Activated CD4-positive, alpha-beta memory T cell treated with anti-CD3 and anti-CD28 coated beads, Interleukin-2, amount 10 ng/mL, durations not matched to agents 7 days and 5 days (primary cell): ENCODE measurements at regions of chr14 and their contacts with region 1.

Region 1: DNA sequence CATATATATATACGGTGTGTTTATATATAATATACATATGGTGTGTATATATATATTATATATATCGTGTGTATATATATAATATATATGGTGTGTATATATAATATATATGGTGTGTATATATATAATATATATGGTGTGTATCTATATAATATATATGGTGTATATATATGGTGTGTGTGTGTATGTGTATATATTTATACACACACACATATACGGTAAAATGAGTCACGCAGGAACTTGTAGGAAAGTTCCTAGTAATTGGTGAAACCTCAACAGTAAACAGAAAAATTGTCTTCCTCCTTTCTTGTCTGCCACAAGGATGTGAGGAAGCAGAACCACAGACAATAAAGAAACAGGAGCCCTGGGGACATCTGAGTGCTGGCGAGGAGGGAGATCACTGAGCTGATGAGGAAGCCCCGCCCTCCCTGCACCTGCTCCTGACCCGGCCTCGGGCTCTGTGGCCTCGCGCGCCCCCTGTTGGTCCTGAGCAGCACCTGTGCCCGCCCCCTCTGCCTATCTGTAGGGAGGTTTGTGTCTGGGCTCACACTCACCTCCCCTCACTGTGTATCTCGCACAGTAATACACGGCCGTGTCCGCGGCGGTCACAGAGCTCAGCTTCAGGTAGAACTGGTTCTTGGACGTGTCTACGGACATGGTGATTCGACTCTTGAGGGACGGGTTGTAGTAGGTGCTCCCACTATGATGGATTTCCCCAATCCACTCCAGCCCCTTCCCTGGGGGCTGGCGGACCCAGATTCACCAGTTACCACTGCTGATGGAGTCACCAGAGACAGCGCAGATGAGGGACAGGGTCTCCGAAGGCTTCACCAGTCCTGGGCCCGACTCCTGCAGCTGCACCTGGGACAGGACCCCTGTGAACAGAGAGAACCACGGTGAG is 1079.4 kb downstream of the TMEM121 start:
- DNase-seq: peak; percentile 82
- H3K4me3 Mint-ChIP-seq: no peak overlapping the region
- H3K27ac Mint-ChIP-seq: no peak overlapping the region
- H3K4me1 Mint-ChIP-seq: peaks cover 11% of the 10 kb centered on the region
- H3K27me3 Mint-ChIP-seq: peaks cover 55% of the 10 kb centered on the region

Region 2: DNA sequence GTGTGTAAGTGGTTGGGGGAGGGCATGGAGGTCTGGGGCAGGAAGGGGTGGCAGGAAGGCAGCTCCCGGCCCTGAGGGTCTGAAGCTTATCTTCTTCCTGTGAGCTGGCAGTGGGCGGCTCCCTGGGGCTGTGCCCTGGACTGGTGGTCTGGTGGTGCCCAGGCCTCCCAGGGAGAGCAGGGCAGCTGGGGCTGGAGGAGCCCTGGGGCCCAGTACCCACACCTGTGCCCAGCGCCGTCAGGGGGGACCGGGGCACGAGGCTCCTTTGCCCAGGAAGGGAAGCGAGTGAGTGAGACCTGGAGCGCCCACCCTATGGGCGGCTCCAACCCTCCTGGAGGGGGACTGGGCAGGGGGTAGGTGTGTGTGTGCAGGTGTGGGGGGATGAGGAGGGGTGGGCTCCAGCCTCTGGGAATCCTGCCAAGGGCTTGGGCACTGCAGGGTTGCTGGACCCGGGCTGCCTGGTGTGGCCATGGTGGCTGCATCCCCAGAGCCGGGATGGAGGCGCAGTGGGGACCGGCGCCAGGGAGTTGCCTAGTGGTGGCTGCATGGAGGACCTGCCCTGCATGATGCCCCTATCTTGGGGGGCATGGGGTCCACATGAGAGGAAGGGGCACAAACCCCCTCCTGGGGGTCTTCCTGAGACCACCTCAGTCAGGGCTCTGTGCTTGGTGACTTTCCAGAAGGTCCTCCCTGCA is 725.8 kb before region 1 on chr14:
- CTCF ChIA-PET with region 1: no interaction called
- POLR2A ChIA-PET with region 1: no interaction called
- DNase-seq: no peak
- H3K4me3 Mint-ChIP-seq: no peak overlapping the region
- H3K27ac Mint-ChIP-seq: no peak overlapping the region
- H3K4me1 Mint-ChIP-seq: peaks cover 4% of the 10 kb centered on the region
- H3K27me3 Mint-ChIP-seq: peaks cover 37% of the 10 kb centered on the region

Region 3: DNA sequence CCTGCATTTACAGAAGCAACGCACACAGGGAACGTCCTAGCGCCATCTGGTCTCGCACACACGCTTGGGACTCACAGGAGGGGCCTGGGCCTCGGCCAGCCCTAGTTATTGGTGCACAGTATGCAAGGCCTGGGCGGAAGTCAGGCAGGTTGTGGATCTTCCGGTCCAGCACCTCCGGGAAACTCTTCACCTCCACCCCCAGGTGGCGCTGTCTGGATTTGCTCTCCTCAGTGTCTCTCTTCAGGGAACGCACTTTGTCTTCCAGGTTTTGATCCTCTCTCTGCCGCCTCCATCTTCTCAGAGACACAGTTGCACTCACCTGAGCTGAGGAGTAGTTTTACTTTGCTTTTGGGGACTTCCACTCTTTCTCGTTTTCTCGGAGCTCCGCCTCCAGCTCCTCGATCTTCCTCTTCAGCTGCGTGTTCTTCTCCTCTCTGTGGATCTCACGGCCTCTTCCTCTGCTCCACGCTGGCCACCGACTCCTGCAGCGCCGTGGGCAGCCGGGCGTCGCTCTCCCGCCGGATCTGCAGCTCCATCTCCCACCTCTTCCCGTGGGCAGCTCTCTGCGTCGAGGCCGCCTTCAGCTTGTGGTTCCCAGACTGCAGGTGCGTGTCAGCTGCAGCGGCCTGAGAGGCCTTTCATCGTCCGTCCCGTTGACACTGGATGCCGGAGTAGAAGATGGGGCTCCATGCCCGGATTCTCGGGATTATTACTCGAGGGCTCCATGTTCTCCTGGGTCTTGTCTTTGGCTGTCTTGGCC is 145.6 kb before region 1 on chr14:
- CTCF ChIA-PET with region 1: no interaction called
- POLR2A ChIA-PET with region 1: no interaction called
- DNase-seq: peak; percentile 74
- H3K4me3 Mint-ChIP-seq: no peak overlapping the region
- H3K27ac Mint-ChIP-seq: no peak overlapping the region
- H3K4me1 Mint-ChIP-seq: peaks cover 13% of the 10 kb centered on the region
- H3K27me3 Mint-ChIP-seq: peaks cover 13% of the 10 kb centered on the region

Region 4: GRCh38 chr14:106518054-106518943 is 87.5 kb before region 1 on chr14:
- CTCF ChIA-PET with region 1: no interaction called
- POLR2A ChIA-PET with region 1: no interaction called
- DNase-seq: peak; percentile 85
- H3K4me3 Mint-ChIP-seq: no peak overlapping the region
- H3K27ac Mint-ChIP-seq: no peak overlapping the region
- H3K4me1 Mint-ChIP-seq: peaks cover 14% of the 10 kb centered on the region
- H3K27me3 Mint-ChIP-seq: peaks cover 46% of the 10 kb centered on the region

Region 5: DNA sequence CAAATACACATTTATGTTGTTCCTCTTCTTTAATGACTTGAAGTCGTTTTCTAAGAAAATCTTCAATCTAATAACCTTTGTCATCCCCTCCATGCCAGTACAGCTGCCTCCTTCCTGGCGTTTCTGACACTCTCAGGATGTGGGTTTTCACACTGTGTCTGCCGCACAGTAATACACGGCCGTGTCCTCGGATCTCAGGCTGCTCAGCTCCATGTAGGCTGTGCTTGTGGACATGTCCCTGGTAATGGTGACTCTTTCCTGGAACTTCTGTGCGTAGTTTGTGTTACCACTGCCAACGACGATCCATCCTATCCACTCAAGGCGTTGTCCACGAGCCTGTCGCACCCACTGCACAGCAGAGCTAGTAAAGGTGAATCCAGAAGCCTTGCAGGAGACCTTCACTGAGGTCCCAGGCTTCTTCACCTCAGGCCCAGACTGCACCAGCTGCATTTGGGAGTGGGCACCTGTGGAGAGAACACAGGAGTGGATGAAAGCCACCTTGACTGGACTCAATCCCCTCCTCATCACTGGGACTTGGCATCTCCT is 16.5 kb after region 1 on chr14:
- CTCF ChIA-PET with region 1: interaction called, 34 read pairs
- POLR2A ChIA-PET with region 1: no interaction called
- DNase-seq: peak; percentile 68
- H3K4me3 Mint-ChIP-seq: no peak overlapping the region
- H3K27ac Mint-ChIP-seq: no peak overlapping the region
- H3K4me1 Mint-ChIP-seq: peaks cover 25% of the 10 kb centered on the region
- H3K27me3 Mint-ChIP-seq: peaks cover 55% of the 10 kb centered on the region

Region 6: GRCh38 chr14:106813477-106813823 is 207.7 kb after region 1 on chr14:
- CTCF ChIA-PET with region 1: no interaction called
- POLR2A ChIA-PET with region 1: no interaction called
- DNase-seq: no peak
- H3K4me3 Mint-ChIP-seq: no peak overlapping the region
- H3K27ac Mint-ChIP-seq: no peak overlapping the region
- H3K4me1 Mint-ChIP-seq: peaks cover 25% of the 10 kb centered on the region
- H3K27me3 Mint-ChIP-seq: peaks cover 24% of the 10 kb centered on the region